AG04449 (cell line): ENCODE measurements at regions of chr3 and their contacts with region 1.

Region 1: GRCh38 chr3:52385157-52385556 is 59.7 kb downstream of the SEMA3G start:
- DNase-seq: no peak
- H3K4me3 ChIP-seq: no peak overlapping the region
- CTCF ChIP-seq: peak; percentile 70

Region 2: DNA sequence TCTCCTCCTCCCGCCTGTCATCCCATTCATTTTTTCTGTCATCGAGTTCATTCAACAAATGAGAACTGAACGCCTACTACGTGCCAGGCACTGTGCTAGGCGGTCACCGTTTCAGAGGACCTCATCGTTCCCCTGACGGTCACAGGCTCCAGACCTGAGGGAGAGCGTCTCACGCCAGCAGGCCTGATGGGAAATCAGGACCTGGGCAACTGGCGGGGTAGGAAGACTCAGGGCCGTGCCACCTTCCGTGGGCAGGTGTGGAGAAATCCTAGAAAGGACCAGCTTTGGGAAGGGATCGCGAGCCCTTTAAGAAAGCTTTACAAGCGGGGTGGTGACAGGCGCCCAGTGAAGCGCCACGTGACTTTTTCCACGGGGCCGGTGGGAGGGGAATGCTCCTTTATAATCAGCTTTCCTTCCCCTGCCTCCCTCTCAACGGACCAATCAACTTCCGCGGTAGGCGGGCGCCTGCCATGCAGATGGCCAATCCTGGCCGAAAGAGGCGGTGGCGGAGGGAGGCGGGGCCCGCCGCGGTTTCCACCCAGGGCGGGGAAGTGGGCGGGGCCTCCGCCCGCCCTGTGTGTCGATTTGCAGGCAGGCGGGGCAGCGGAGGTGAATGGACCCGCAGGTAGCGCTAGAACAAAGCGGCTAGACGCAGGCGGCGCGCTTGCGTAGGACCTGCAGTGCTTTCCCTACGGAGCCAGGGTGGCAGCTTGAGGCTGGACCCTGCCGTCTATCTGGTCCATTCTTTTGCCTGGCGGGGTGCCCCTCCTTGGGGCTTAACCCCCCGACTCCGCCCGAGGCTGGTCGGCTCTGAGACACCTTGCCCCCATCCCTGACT is 328.0 kb before region 1 on chr3:
- CTCF ChIA-PET with region 1: no interaction called
- POLR2A ChIA-PET with region 1: no interaction called
- DNase-seq: peak; percentile 86
- H3K4me3 ChIP-seq: peak overlapping the region; percentile 72
- CTCF ChIP-seq: no peak

Region 3: GRCh38 chr3:52197842-52198668 is 187.1 kb before region 1 on chr3 and contains the start of gene ALAS1:
- CTCF ChIA-PET with region 1: no interaction called
- POLR2A ChIA-PET with region 1: no interaction called
- DNase-seq: peak; percentile 16
- H3K4me3 ChIP-seq: peak within 1 kb of the TSS; percentile 84
- CTCF ChIP-seq: peak; percentile 16

Region 4: DNA sequence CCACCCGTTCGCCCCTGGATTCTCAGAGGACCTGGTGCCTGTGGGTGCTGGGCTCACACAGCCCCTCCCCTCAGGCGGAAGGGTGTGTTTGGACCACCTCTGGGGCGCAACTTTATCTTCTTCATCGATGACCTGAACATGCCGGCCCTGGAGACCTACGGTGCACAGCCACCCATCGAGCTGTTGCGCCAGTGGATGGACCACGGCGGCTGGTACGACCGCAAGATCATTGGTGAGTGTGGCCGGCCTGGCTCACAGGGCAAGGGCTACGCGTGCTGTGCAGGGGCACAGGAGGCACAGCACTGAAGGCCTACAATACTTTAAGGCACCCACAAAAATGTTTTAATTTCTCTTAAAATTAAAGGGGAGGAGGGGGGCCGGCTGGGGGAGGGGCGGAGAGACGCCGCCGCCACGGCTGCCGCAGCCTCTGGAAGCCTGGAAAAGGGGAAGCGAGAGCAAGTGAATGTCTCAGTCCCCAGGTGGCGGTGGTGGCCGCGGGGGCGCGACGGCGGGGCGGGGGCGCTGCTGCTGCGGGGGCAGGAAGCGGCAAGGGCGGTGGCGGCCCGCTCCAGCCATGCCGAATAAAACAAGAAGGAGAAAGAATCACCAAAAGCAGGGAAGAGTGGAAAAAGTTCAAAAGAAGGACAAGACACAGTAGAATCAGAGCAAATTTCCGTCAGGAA is 12.2 kb before region 1 on chr3:
- CTCF ChIA-PET with region 1: interaction called, 32 read pairs
- POLR2A ChIA-PET with region 1: no interaction called
- DNase-seq: no peak
- H3K4me3 ChIP-seq: peak overlapping the region; percentile 32
- CTCF ChIP-seq: no peak

Region 5: GRCh38 chr3:52395488-52395835 is 10.3 kb after region 1 on chr3:
- CTCF ChIA-PET with region 1: interaction called, 10 read pairs
- POLR2A ChIA-PET with region 1: interaction called, 3 read pairs
- DNase-seq: no peak
- H3K4me3 ChIP-seq: no peak overlapping the region
- CTCF ChIP-seq: no peak